Activated B cell treated with CpG ODN at 0.5 μM for 24 hours (primary cell): ENCODE measurements at regions of chr2 and their contacts with region 1.

Region 1: DNA sequence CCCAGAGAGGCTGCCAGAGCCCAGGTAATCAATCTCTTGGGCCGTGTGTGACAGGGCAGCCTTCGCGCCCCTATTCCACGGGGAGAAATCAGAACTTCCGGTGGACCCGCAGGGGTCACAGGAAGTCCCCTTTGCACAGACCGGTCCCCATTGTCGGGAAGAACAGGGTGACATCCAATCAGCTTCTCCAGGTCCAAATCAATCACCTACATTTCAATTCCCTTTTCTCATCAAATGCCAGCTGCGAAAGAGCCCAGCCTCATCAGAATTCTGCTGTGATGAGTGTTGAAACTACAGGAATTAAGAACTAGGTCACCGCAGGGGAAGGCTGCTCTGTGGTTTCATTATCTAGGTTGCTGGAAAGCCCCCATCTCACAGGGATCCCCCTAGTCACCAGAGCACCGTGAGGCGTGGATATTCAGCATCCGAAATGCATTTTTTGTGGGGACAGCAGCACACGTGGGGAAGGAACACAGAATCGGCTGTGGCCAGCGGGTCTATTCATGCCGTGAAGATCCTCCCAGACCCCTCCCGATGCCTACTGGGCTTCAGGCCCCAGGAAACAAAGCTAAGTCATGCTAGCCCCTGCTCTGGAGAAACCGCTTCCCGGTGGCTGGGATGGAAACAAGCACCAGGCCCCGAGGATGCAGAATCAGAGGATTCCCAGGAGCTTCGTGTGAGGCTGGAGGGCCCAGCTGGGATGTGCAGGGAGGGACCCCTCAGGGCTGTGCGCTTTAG is 193.7 kb upstream of the ID2 start:
- DNase-seq: peak; percentile 34
- ATAC-seq: peak; percentile 92
- H3K4me3 Mint-ChIP-seq: peak overlapping the region; percentile 73
- H3K27ac Mint-ChIP-seq: peak overlapping the region; percentile 57
- H3K4me1 Mint-ChIP-seq: peaks cover 29% of the 10 kb centered on the region
- H3K27me3 Mint-ChIP-seq: peaks cover 81% of the 10 kb centered on the region
- CTCF ChIP-seq: no peak

Region 2: GRCh38 chr2:8514796-8515758 is 26.9 kb after region 1 on chr2:
- CTCF ChIA-PET with region 1: no interaction called
- POLR2A ChIA-PET with region 1: interaction called, 3 read pairs
- intact Hi-C with region 1: loop called (anchors 1 kb)
- DNase-seq: no peak
- ATAC-seq: peak; percentile 84
- H3K4me3 Mint-ChIP-seq: peak overlapping the region; percentile 36
- H3K27ac Mint-ChIP-seq: peak overlapping the region; percentile 27
- H3K4me1 Mint-ChIP-seq: peaks cover 27% of the 10 kb centered on the region
- H3K27me3 Mint-ChIP-seq: peaks cover 22% of the 10 kb centered on the region
- CTCF ChIP-seq: no peak